Ovary (tissue), 10 donors: ENCODE measurements at regions of chr5 and their contacts with region 1.

Region 1: GRCh38 chr5:171835077-171835476 is 49.5 kb downstream of the SMIM23 start:
- DNase-seq: no peak
- H3K4me3 ChIP-seq: no peak overlapping the region
- H3K27ac ChIP-seq: no peak overlapping the region
- H3K4me1 ChIP-seq: no peaks in the 10 kb centered on the region
- H3K27me3 ChIP-seq: no peaks in the 10 kb centered on the region
- CTCF ChIP-seq: no peak
- EP300 ChIP-seq: no peak
- POLR2A ChIP-seq: no peak

Region 2: GRCh38 chr5:171776770-171777759 is 58.0 kb before region 1 on chr5:
- intact Hi-C with region 1: loop called in 1 of 4 experiments (anchors 10 kb)
- DNase-seq: no peak
- H3K4me3 ChIP-seq: no peak overlapping the region
- H3K27ac ChIP-seq: no peak overlapping the region
- H3K4me1 ChIP-seq: no peaks in the 10 kb centered on the region
- H3K27me3 ChIP-seq: no peaks in the 10 kb centered on the region
- CTCF ChIP-seq: no peak
- EP300 ChIP-seq: no peak
- POLR2A ChIP-seq: no peak